Posterior vena cava (tissue), 2 donors: ENCODE measurements at regions of chr1 and their contacts with region 1.

Region 1: GRCh38 chr1:76951153-76951552 is 83.9 kb downstream of the ST6GALNAC5 start:
- DNase-seq: no peak

Region 2: DNA sequence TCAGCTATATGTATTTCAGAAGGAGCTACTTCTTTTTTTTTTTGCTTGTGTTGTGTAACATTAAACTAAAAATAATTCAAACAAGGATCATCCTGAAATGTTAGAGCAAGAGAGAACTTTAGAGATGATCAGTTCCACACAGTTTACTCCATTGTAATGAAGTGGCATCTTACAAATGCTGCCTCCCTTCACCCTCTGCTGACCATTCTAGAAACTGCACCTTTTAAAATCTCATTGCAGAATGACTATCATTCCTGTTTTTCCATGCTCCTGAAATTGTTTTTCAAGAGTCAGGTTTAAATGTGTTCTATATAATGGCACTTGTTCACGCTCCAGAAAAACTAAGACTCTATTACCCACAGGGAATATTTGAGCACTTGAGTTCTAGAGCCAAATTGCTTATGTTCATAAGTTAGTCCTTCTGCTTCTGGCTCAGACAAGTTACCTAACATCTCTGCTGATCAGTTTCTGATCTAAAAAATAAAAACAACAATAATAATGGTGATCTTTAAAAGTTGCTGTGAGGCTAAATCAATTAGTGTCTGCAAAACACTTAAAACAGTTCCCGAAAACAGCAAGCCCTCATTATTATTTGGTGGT is 1318.7 kb before region 1 on chr1:
- intact Hi-C with region 1: no loop called
- DNase-seq: no peak

Region 3: GRCh38 chr1:76317299-76317900 is 633.8 kb before region 1 on chr1:
- intact Hi-C with region 1: loop called in 1 of 2 experiments (anchors 5 kb)
- DNase-seq: no peak